ENCODE measurements at regions of chr16 and their contacts with region 1.

Region 1: DNA sequence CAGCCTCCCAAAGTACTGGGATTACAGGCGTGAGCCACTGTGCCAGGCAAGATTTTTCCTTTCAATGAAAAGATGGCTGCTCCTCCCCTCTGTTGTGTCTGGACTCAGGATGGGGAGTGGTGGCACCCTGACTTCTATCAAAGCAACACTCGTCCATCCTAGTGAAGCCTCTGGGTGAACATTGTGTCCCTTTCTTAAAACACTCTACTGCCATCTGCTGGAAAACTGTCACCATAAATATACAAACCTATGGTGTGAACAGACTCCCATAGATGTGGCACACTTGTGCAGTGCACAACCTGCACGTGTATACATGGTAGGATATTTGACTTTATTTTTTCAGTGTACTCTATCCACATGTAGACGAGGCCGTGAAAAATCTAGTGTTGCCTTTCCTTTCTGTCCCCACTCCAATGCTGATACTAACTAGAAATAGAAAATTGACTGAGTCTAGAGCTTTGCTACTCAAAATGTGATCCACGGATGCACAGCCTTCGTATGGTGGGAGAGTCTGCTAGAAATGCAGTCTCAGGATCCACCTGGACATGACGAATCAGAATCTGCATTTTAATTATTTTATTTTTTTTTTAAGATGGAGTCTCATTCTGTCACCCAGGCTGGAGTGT is 55.9 kb upstream of the PLCG2 start:
- DNase-seq: peak; percentile 62
- ATAC-seq: peak; percentile 97
- H3K4me3 ChIP-seq: no peak overlapping the region
- H3K27ac ChIP-seq: no peak overlapping the region
- H3K4me1 ChIP-seq: peaks cover 7% of the 10 kb centered on the region
- H3K27me3 ChIP-seq: no peaks in the 10 kb centered on the region
- CTCF ChIP-seq: peak; percentile 60 to 78 (median 69); a peak in 5 of 6 replicates
- EP300 ChIP-seq: no peak
- POLR2A ChIP-seq: no peak
- RAD21 ChIP-seq: peak; percentile 92

Region 2: DNA sequence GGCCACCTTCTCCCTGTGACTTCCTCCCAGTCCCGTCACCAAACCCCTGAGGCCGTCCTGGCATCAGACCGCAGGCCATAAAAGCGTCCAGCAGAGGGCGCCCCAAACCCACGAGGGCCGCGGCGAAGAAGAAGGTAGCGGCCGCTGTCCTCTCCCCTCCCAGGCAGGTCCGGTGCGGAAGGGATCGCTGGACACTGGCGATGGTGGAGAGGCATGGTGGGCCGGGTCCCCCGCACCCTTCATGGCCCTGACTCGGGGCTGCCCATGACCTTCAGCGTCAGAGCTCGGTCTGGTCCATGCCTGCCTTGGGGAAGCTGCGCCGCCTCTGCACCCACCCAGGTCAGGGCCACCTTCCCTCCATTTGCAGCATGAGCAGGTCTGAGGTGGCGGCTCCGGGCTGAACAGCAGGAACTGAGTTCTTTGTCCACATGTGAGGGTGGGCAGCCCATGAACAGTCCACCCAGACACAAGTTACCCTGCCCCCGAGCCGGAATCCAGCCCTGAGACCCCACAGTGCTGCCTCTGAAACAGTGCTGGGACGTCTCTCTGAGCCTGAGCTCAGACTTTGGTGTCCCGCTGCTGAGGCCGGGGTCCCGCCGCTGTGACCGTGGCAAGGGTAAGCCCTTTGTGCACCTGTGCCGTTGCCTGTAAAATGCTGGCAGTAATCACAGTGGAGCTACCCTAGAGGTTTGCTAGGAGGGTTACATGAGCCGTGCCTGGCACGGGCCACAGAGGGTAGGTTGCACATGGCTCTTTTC is 319.4 kb before region 1 on chr16:
- CTCF ChIA-PET with region 1: interaction called, 18 read pairs
- POLR2A ChIA-PET with region 1: no interaction called
- RAD21 ChIA-PET with region 1: interaction called, 5 read pairs
- SMC1A ChIA-PET with region 1: interaction called, 7 read pairs
- in situ Hi-C with region 1: loop called (anchors 10 kb)
- intact Hi-C with region 1: loop called (anchors 1 kb)
- DNase-seq: peak; percentile 28
- ATAC-seq: peak; percentile 100
- H3K4me3 ChIP-seq: no peak overlapping the region
- H3K27ac ChIP-seq: no peak overlapping the region
- H3K4me1 ChIP-seq: no peaks in the 10 kb centered on the region
- H3K27me3 ChIP-seq: no peaks in the 10 kb centered on the region; a peak in 1 of 4 replicates
- CTCF ChIP-seq: peak; percentile 87 to 96 (median 88)
- EP300 ChIP-seq: no peak
- POLR2A ChIP-seq: no peak
- RAD21 ChIP-seq: peak; percentile 99